A673 (cell line): ENCODE measurements at regions of chr2 and their contacts with region 1.

Region 1: DNA sequence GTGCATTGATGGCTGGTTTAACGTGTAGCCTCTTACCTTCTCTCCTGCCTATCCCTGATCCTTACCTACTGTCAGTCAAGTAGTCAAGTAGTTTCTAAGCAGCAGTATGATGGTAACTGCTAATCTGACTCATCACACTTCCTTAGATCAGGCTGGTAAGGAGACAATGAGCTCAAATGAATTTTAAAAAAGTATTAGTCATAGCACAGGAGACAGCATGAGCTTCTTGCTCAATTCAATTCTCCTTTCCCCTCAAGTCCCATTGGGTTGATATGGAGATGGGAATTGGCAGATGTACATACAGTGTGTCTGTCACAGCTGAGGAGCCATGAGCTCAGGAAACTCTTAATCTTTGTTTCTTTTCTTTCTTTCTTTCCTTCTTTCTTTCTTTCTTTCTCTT is 799.7 kb downstream of the LRP1B start:
- DNase-seq: peak; percentile 90
- H3K4me3 ChIP-seq: no peak overlapping the region
- H3K27ac ChIP-seq: no peak overlapping the region
- H3K4me1 ChIP-seq: peaks cover 8% of the 10 kb centered on the region
- H3K27me3 ChIP-seq: no peaks in the 10 kb centered on the region
- CTCF ChIP-seq: no peak

Region 2: GRCh38 chr2:141259683-141260082 is 71.4 kb before region 1 on chr2:
- CTCF ChIA-PET with region 1: no interaction called
- POLR2A ChIA-PET with region 1: no interaction called
- intact Hi-C with region 1: no loop called
- DNase-seq: no peak
- H3K4me3 ChIP-seq: no peak overlapping the region
- H3K27ac ChIP-seq: no peak overlapping the region
- H3K4me1 ChIP-seq: no peaks in the 10 kb centered on the region
- H3K27me3 ChIP-seq: no peaks in the 10 kb centered on the region
- CTCF ChIP-seq: no peak

Region 3: GRCh38 chr2:141554810-141555209 is 223.7 kb after region 1 on chr2:
- CTCF ChIA-PET with region 1: no interaction called
- POLR2A ChIA-PET with region 1: no interaction called
- intact Hi-C with region 1: loop called (anchors 10 kb)
- DNase-seq: peak; percentile 74
- H3K4me3 ChIP-seq: no peak overlapping the region
- H3K27ac ChIP-seq: no peak overlapping the region
- H3K4me1 ChIP-seq: peaks cover 21% of the 10 kb centered on the region
- H3K27me3 ChIP-seq: no peaks in the 10 kb centered on the region
- CTCF ChIP-seq: peak; percentile 76

Region 4: DNA sequence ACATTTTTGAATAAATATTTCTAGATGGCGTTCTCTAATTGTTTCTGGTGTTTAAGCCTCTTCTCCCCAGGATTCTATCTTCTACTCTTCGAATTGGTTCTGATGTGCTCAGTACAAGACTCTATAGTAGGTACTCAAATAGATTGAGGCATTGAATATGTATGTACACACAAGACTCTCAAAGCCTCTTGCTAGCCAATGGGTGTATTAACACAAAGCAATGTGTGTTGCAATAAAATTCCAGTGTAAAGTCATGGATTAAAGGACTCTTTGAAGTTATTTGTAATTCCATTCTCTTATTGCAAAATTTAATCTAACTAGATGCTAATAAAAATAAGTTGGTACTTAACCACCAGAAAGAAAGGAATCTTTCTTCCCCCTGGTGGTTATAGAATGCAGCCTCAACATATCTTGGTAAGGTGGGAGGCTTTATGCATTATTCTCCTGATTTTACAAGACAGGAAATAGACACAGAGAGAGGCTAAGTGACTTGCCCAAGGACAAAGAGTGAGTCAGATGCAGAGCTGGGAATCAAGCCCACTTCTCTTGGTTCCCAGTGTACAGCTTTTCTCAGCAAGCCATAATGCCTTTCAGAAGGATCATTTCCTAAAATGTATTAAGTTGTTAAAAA is 781.6 kb after region 1 on chr2:
- CTCF ChIA-PET with region 1: interaction called, 10 read pairs
- POLR2A ChIA-PET with region 1: no interaction called
- intact Hi-C with region 1: no loop called
- DNase-seq: peak; percentile 98
- H3K4me3 ChIP-seq: no peak overlapping the region
- H3K27ac ChIP-seq: peak overlapping the region; percentile 55
- H3K4me1 ChIP-seq: peaks cover 28% of the 10 kb centered on the region
- H3K27me3 ChIP-seq: no peaks in the 10 kb centered on the region
- CTCF ChIP-seq: peak; percentile 70

Region 5: GRCh38 chr2:142140434-142140845 is 809.3 kb after region 1 on chr2:
- CTCF ChIA-PET with region 1: no interaction called
- POLR2A ChIA-PET with region 1: no interaction called
- intact Hi-C with region 1: loop called (anchors 10 kb)
- DNase-seq: peak; percentile 64
- H3K4me3 ChIP-seq: no peak overlapping the region
- H3K27ac ChIP-seq: no peak overlapping the region
- H3K4me1 ChIP-seq: peaks cover 42% of the 10 kb centered on the region
- H3K27me3 ChIP-seq: no peaks in the 10 kb centered on the region
- CTCF ChIP-seq: peak; percentile 71